Dorsolateral prefrontal cortex (tissue), 120 donors: ENCODE measurements at regions of chr1 and their contacts with region 1.

Region 1: GRCh38 chr1:160997323-160998038 is 23.5 kb downstream of the F11R start:
- DNase-seq: peak in 8 of 10 donors; percentile 5 to 58 (median 46)
- H3K4me3 ChIP-seq: no peak overlapping the region
- H3K27ac ChIP-seq: peak overlapping the region in 22 of 59 donors; percentile 6 to 78 (median 42)
- H3K27me3 ChIP-seq: no peaks in the 10 kb centered on the region
- CTCF ChIP-seq: peak in 53 of 56 donors; percentile 29 to 67 (median 52)

Region 2: GRCh38 chr1:160884579-160884978 is 112.9 kb before region 1 on chr1:
- intact Hi-C with region 1: no loop called
- DNase-seq: no peak
- H3K4me3 ChIP-seq: no peak overlapping the region
- H3K27ac ChIP-seq: no peak overlapping the region
- H3K27me3 ChIP-seq: peaks cover 0 to 3% (median 0%) of the 10 kb centered on the region in 45 donors
- CTCF ChIP-seq: no peak

Region 3: DNA sequence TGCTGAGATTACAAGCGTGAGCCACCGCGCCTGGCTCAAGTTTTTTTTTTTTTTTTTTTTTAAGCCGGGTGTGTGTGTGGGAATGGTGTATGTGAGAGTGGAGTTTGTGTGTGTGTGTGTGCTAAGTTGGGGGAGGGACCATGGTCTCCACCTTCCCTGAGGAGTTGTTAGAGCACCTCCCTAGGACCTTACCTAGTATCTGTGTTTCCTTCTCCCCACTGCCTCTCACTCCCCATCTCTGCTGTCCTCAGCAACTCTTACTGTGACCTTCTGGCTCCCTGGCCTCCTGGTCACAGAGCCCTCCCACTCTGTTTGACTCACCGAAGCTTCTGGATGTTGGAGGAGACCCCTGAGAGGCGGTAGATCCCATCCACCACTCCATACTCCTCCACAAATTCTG is 61.8 kb after region 1 on chr1:
- intact Hi-C with region 1: no loop called
- DNase-seq: no peak
- H3K4me3 ChIP-seq: no peak overlapping the region
- H3K27ac ChIP-seq: no peak overlapping the region
- H3K27me3 ChIP-seq: peaks cover 0 to 12% (median 0%) of the 10 kb centered on the region in 45 donors
- CTCF ChIP-seq: no peak

Region 4: DNA sequence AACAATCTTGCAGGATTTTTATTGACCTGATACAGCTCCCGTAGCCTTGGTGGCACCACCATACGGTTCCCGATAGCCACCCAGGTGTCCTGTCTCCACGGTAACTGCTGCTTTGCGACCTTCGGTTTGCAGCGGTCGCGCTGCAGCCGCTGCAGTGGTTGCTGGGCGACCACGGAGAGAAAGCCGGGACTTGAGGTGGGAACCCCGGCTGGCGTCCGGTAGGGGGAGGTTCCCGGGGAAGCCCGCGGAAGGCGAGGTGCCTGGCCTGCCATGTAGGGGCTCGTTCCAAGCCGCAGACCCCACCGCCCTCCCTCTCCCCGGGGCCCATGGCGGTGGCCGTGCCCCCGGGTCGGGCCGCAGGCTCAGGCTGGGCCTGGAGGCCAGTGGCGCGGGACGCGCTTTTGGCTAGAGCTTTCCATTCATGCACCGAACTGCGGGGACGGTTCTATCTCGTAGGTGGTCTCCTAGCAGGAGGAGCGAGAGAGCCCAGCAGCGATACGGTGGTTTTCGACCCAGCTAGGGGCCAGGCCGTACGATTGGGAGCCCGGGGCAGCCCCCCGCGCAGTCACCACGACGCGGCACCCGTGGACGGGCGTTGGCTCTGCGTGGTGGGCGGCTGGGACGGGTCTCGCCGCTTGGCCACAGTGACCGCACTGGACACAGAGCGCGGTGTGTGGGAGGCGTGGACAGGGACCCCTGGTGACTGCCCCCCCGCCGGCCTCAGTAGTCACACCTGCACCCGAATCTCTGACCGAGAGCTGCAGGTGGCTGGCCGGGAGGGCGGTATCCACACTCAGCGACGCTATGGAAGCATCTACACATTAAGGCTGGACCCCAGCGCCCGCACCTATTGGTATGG is 101.0 kb after region 1 on chr1 and contains the start of gene KLHDC9:
- intact Hi-C with region 1: loop called in 1 of 2 experiments (anchors 10 kb)
- DNase-seq: peak; percentile 51 to 90 (median 80)
- H3K4me3 ChIP-seq: peak within 1 kb of the TSS; percentile 55 to 96 (median 78)
- H3K27ac ChIP-seq: peak within 1 kb of the TSS in 58 of 59 donors; percentile 36 to 93 (median 81)
- H3K27me3 ChIP-seq: no peaks in the 10 kb centered on the region
- CTCF ChIP-seq: peak in 18 of 56 donors; percentile 1 to 45 (median 7)
- total RNA-seq, gene KLHDC9: 15.1 to 54.9 (median 36.9) TPM

Region 5: GRCh38 chr1:161440312-161440894 is 442.9 kb after region 1 on chr1:
- intact Hi-C with region 1: no loop called
- DNase-seq: peak in 6 of 10 donors; percentile 24 to 63 (median 36)
- H3K4me3 ChIP-seq: peak overlapping the region; percentile 14 to 81 (median 63)
- H3K27ac ChIP-seq: peak overlapping the region in 34 of 59 donors; percentile 13 to 88 (median 68)
- H3K27me3 ChIP-seq: peaks cover 0 to 55% (median 39%) of the 10 kb centered on the region in 45 donors
- CTCF ChIP-seq: peak in 49 of 56 donors; percentile 21 to 71 (median 46)